ENCODE measurements at regions of chr15 and their contacts with region 1.

Region 1: DNA sequence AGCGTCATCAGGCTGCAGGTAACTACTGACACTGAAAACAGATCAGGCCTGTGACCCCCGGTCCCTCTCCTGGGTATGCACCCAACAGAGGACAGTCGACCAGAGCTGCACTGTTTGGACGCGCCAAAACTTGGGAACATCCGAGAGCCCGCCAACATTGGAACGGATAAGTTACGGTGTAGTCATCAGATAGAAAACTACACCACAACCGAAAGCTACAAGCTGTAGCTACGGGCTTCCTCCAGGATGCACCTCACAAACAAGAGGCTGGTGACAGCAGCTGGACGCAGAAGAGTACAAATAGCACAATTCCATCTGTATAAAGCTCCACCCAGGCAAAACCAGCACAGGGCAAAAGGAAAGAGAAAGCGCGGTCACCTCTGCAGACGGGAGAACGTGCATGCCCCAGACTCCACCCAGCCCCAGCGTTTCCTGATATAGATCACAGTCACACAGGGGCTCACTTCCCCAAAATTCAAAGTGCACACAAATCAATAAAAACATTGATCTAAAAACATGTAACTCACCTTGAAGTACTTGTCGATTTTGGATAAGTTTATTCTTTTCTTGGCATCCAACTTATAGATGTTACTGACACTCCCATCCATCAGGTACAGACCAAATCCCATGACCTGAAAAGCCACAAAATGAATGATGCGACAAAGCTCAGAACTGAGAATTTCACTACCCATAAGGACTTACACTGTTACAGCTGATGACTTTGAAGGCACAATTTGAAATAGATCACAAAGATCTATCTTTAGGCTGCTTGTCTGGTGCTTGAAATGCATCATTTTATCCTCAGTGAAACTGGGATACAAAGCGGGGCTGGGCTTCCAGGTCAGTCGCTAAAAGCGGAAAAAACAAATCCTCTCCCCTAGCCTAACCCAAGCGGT is 43.3 kb downstream of the CYFIP1 start:
- DNase-seq: no peak
- ATAC-seq: no peak
- H3K4me3 ChIP-seq: no peak overlapping the region
- H3K27ac ChIP-seq: no peak overlapping the region
- H3K4me1 ChIP-seq: no peaks in the 10 kb centered on the region
- H3K27me3 ChIP-seq: no peaks in the 10 kb centered on the region

Region 2: DNA sequence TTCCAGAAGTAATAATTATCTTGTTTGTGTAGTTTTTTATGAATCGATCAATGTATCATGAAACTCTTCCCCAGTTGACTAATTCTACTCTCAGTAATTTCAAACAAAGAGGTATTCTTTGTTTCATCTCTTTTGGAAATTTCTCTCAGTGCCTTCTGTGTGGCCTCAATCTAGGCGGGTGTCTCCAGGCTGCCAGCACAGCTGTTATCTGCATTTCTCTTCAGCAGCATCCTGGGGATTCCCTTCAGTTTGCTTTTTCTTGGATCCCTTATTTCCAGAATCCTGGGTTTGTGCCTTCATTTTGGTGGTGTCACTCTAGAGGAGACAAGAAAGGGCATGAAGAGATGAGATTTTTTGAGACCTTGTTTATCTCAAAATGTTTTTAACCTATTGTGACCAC is 75.7 kb before region 1 on chr15:
- intact Hi-C with region 1: no loop called
- DNase-seq: no peak
- ATAC-seq: no peak
- H3K4me3 ChIP-seq: no peak overlapping the region
- H3K27ac ChIP-seq: no peak overlapping the region
- H3K4me1 ChIP-seq: no peaks in the 10 kb centered on the region
- H3K27me3 ChIP-seq: no peaks in the 10 kb centered on the region

Region 3: GRCh38 chr15:22989576-22990477 is 53.0 kb after region 1 on chr15:
- intact Hi-C with region 1: loop called in 1 of 4 experiments (anchors 10 kb)
- DNase-seq: no peak
- ATAC-seq: no peak
- H3K4me3 ChIP-seq: no peak overlapping the region
- H3K27ac ChIP-seq: no peak overlapping the region
- H3K4me1 ChIP-seq: no peaks in the 10 kb centered on the region
- H3K27me3 ChIP-seq: no peaks in the 10 kb centered on the region